ENCODE measurements at regions of chr1 and their contacts with region 1.

Region 1: DNA sequence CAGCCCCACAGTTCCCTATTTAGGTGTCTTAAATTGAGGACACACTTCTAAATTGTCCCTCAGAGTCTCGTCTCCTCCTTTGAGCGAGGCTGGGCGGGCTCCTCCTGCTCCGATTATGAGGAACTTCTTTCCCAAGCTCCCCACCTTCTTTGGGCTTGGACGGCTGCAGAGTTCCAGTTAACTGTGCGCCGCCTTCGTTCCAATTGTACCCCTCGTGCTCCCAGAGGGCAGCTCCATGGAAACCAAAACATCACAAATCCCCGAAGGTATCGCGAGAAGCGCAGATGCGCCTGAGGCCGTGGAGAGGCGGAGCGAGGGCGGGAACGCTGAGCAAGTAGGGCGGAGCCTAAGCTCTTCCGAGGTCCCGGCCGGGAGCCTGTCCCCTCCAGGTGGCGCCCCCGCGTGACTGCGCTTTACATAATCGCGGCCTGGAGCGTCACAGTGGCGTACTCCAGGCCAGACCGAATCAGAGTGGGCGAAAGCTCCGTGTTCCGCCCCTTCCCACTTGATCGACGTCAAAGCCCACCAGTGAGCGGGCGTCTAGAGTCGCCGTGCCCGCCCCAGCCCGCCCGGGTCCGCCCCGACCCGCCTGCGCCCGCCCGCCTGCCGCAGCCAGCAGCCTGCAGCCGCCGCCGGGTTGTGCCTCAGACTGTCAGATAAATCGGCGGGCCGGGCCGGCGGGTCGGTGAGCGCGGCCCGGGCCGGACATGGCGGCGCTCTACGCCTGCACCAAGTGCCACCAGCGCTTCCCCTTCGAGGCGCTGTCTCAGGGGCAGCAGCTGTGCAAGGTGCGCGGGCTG is at the start of gene FAM76A:
- H3K4me3 Mint-ChIP-seq: peak within 1 kb of the TSS; percentile 78
- H3K27ac Mint-ChIP-seq: peak within 1 kb of the TSS; percentile 92
- H3K4me1 Mint-ChIP-seq: peaks cover 16% of the 10 kb centered on the region
- H3K27me3 Mint-ChIP-seq: no peaks in the 10 kb centered on the region

Region 2: GRCh38 chr1:27026621-27027574 is 698.7 kb before region 1 on chr1:
- intact Hi-C with region 1: no loop called
- H3K4me3 Mint-ChIP-seq: no peak overlapping the region
- H3K27ac Mint-ChIP-seq: peak overlapping the region; percentile 55
- H3K4me1 Mint-ChIP-seq: peaks cover 36% of the 10 kb centered on the region
- H3K27me3 Mint-ChIP-seq: peaks cover 8% of the 10 kb centered on the region

Region 3: GRCh38 chr1:27659497-27660299 is 65.9 kb before region 1 on chr1:
- intact Hi-C with region 1: no loop called
- H3K4me3 Mint-ChIP-seq: peak overlapping the region; percentile 72
- H3K27ac Mint-ChIP-seq: peak overlapping the region; percentile 95
- H3K4me1 Mint-ChIP-seq: peaks cover 75% of the 10 kb centered on the region
- H3K27me3 Mint-ChIP-seq: no peaks in the 10 kb centered on the region

Region 4: GRCh38 chr1:27671964-27672749 is 53.4 kb before region 1 on chr1 and contains the start of gene IFI6:
- intact Hi-C with region 1: loop called (anchors 2 kb)
- H3K4me3 Mint-ChIP-seq: peak within 1 kb of the TSS; percentile 76
- H3K27ac Mint-ChIP-seq: peak within 1 kb of the TSS; percentile 82
- H3K4me1 Mint-ChIP-seq: peaks cover 46% of the 10 kb centered on the region
- H3K27me3 Mint-ChIP-seq: no peaks in the 10 kb centered on the region

Region 5: GRCh38 chr1:27772933-27773825 is 47.6 kb after region 1 on chr1 and contains the start of gene STX12:
- intact Hi-C with region 1: loop called (anchors 2 kb)
- H3K4me3 Mint-ChIP-seq: peak within 1 kb of the TSS; percentile 94
- H3K27ac Mint-ChIP-seq: peak within 1 kb of the TSS; percentile 87
- H3K4me1 Mint-ChIP-seq: peaks cover 28% of the 10 kb centered on the region
- H3K27me3 Mint-ChIP-seq: no peaks in the 10 kb centered on the region